ENCODE measurements at regions of chr3 and their contacts with region 1.

Region 1: DNA sequence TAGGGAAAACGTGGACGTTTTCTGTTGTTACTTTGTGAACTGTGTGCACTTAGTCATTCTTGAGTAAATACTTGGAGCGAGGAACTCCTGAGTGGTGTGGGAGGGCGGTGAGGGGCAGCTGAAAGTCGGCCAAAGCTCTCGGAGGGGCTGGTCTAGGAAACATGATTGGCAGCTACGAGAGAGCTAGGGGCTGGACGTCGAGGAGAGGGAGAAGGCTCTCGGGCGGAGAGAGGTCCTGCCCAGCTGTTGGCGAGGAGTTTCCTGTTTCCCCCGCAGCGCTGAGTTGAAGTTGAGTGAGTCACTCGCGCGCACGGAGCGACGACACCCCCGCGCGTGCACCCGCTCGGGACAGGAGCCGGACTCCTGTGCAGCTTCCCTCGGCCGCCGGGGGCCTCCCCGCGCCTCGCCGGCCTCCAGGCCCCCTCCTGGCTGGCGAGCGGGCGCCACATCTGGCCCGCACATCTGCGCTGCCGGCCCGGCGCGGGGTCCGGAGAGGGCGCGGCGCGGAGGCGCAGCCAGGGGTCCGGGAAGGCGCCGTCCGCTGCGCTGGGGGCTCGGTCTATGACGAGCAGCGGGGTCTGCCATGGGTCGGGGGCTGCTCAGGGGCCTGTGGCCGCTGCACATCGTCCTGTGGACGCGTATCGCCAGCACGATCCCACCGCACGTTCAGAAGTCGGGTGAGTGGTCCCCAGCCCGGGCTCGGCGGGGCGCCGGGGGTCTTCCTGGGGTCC is at the start of gene TGFBR2:
- DNase-seq: peak; percentile 93 to 95 (median 95)
- H3K4me3 ChIP-seq: peak within 1 kb of the TSS; percentile 68 to 97 (median 90)
- H3K4me3 Mint-ChIP-seq: peak within 1 kb of the TSS; percentile 95 to 96
- H3K27ac ChIP-seq: peak within 1 kb of the TSS; percentile 93 to 96
- H3K27ac Mint-ChIP-seq: peak within 1 kb of the TSS; percentile 90 to 99 (median 99)
- H3K4me1 ChIP-seq: peaks cover 60 to 78% of the 10 kb centered on the region in 2 donors
- H3K4me1 Mint-ChIP-seq: peaks cover 68% of the 10 kb centered on the region
- H3K27me3 ChIP-seq: no peaks in the 10 kb centered on the region
- H3K27me3 Mint-ChIP-seq: no peaks in the 10 kb centered on the region
- CTCF ChIP-seq: peak; percentile 44
- polyA plus RNA-seq, gene TGFBR2: 46.6 to 60.3 (median 57.0) TPM

Region 2: GRCh38 chr3:30475038-30475808 is 131.2 kb before region 1 on chr3:
- intact Hi-C with region 1: loop called in 1 of 2 experiments (anchors 10 kb)
- DNase-seq: no peak
- H3K4me3 ChIP-seq: no peak overlapping the region
- H3K4me3 Mint-ChIP-seq: no peak overlapping the region
- H3K27ac ChIP-seq: no peak overlapping the region
- H3K27ac Mint-ChIP-seq: peak overlapping the region in 3 of 7 donors; percentile 21 to 72 (median 23)
- H3K4me1 ChIP-seq: peaks cover 59 to 66% of the 10 kb centered on the region in 2 donors
- H3K4me1 Mint-ChIP-seq: peaks cover 64% of the 10 kb centered on the region
- H3K27me3 ChIP-seq: no peaks in the 10 kb centered on the region
- H3K27me3 Mint-ChIP-seq: no peaks in the 10 kb centered on the region
- CTCF ChIP-seq: no peak

Region 3: DNA sequence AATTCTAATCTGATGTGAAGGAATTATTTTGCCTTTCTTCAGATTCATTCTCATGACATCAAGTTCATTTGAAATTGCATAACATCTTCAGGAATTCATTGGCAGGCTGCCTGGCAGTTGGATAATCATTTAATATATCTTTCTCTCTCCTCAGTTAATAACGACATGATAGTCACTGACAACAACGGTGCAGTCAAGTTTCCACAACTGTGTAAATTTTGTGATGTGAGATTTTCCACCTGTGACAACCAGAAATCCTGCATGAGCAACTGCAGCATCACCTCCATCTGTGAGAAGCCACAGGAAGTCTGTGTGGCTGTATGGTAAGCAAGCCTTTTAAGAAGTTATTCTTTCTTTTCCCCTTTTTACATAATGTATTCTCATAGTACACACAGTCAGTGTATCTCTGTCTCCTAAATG is 38.1 kb after region 1 on chr3:
- intact Hi-C with region 1: loop called (anchors 5 kb)
- DNase-seq: peak in 2 of 3 donors; percentile 33 to 43
- H3K4me3 ChIP-seq: peak overlapping the region in 1 of 3 experiments; percentile 44
- H3K4me3 Mint-ChIP-seq: peak overlapping the region in 1 of 2 donors; percentile 16
- H3K27ac ChIP-seq: peak overlapping the region in 1 of 2 donors; percentile 89
- H3K27ac Mint-ChIP-seq: peak overlapping the region; percentile 77 to 90 (median 81)
- H3K4me1 ChIP-seq: peaks cover 96 to 100% of the 10 kb centered on the region in 2 donors
- H3K4me1 Mint-ChIP-seq: peaks cover 96% of the 10 kb centered on the region
- H3K27me3 ChIP-seq: no peaks in the 10 kb centered on the region
- H3K27me3 Mint-ChIP-seq: no peaks in the 10 kb centered on the region
- CTCF ChIP-seq: no peak

Region 4: DNA sequence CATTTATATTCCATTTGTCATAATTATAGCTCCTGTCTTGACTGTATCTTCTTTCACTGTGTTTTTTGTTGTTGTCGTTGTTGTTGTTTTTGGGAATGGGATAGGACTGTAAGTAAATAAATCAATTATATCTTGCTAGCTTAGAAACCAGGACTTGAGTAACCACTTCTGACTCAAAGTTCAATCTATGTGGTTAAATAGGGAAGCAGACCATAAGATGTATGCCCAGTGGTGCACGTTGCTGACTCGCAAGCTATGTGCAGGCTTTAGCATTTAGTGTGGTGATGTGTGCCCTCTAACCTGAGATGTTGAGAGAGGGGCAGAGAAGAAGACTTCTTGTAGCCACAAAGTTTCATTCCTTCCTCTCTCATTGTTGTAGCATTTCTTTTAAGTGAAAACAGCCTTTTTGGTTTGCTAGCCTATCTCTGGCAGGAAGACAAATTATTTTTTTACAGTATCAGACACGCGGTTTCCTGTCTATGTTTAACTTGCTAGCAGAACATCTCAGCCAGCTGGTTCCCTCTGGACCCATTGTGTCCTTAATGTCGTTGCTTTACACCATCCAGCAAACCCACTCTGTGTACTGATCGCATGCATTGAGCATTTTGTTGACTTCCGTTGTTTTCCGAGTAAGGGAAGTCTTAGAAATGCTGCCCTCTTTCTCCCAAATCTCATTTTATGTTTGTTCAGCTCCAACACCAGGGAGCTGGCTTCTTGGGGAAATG is 52.0 kb after region 1 on chr3:
- intact Hi-C with region 1: loop called in 1 of 2 experiments (anchors 5 kb)
- DNase-seq: peak; percentile 68 to 79 (median 76)
- H3K4me3 ChIP-seq: peak overlapping the region in 1 of 3 experiments; percentile 18
- H3K4me3 Mint-ChIP-seq: peak overlapping the region; percentile 21 to 63
- H3K27ac ChIP-seq: peak overlapping the region in 1 of 2 donors; percentile 72
- H3K27ac Mint-ChIP-seq: peak overlapping the region; percentile 66 to 89 (median 80)
- H3K4me1 ChIP-seq: peaks cover 52 to 63% of the 10 kb centered on the region in 2 donors
- H3K4me1 Mint-ChIP-seq: peaks cover 71% of the 10 kb centered on the region
- H3K27me3 ChIP-seq: no peaks in the 10 kb centered on the region
- H3K27me3 Mint-ChIP-seq: peaks cover 0 to 3% (median 0%) of the 10 kb centered on the region in 3 donors
- CTCF ChIP-seq: no peak